Brain microvascular endothelial cell (primary cell): ENCODE measurements at regions of chr17 and their contacts with region 1.

Region 1: GRCh38 chr17:50949989-50950881 is 84.1 kb upstream of the TOB1 start:
- DNase-seq: peak; percentile 89
- H3K4me3 ChIP-seq: no peak overlapping the region
- H3K27ac ChIP-seq: peak overlapping the region; percentile 78
- H3K27me3 ChIP-seq: no peaks in the 10 kb centered on the region
- CTCF ChIP-seq: peak; percentile 82

Region 2: DNA sequence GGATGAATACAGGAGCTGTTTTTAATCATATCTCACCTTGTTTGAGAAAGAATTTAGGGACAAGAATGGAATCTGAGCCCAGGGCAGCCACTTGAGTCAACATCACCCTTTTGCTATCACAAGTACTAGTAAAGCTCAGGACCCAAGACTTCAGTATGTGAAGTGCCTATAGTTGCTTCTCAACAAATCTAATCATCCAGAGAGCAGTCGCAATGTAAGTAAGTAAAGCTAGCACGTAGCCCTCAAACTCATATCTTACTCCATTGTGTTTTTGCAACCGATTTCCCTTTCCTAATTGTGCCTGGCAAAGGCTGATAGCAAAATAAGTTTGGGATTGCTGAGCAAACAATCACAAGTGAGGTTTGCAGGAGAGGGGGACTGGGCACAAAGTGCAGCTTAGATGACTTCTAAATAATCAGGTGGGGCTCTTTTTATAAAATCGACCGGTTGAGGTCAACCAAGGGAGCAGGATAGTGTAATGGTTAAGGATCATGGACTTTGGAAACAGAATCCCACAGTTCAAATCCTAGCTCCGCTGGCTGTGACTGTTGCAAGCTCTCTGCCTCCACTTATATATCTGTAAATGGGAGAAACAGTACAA is 97.1 kb before region 1 on chr17:
- in situ Hi-C with region 1: loop called (anchors 10 kb)
- DNase-seq: no peak
- H3K4me3 ChIP-seq: no peak overlapping the region
- H3K27ac ChIP-seq: no peak overlapping the region
- H3K27me3 ChIP-seq: no peaks in the 10 kb centered on the region
- CTCF ChIP-seq: no peak

Region 3: DNA sequence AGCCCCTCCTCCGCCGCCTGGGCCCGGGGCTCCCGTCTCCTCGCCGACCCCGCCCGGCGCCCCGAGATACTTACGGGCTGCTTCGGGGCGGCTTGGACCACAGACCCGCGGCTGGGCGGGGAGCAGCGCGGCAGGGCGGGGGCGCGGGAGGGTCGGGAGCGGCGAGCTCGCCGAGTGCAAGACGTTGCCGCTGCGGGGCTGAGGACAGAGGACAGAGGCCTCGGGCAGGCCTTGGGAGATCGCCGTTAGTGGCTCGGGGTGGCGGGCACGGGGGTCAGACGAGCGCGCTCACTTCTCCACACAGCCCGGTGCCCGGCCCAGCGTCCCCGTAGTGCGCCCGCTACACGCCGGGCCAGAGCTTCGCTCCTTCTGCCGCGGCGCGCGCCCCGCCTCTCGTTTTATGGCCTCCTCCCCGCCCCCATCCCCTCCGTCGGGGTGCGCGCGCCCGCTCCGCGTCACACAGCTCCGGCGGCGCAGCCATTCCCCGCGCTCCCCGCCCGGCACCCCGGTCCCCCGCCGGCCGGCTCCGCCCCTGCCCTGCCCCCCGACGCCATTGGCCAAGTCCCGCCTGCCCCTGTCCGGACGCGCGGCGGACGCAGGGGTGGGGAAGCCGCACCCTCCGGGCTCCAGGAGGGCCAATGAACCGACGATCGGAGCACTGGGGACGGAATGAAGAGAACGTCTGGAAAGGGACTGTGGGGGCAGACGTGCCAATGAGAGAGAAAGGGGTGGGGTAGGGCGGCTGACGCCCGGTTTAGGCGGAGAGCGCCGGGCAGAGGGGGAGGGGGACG is 84.1 kb before region 1 on chr17 and contains the start of gene TOB1:
- in situ Hi-C with region 1: no loop called
- DNase-seq: peak; percentile 91
- H3K4me3 ChIP-seq: peak within 1 kb of the TSS; percentile 84
- H3K27ac ChIP-seq: peak within 1 kb of the TSS; percentile 91
- H3K27me3 ChIP-seq: no peaks in the 10 kb centered on the region
- CTCF ChIP-seq: no peak